GM10248 (cell line): ENCODE measurements at regions of chr4 and their contacts with region 1.

Region 1: DNA sequence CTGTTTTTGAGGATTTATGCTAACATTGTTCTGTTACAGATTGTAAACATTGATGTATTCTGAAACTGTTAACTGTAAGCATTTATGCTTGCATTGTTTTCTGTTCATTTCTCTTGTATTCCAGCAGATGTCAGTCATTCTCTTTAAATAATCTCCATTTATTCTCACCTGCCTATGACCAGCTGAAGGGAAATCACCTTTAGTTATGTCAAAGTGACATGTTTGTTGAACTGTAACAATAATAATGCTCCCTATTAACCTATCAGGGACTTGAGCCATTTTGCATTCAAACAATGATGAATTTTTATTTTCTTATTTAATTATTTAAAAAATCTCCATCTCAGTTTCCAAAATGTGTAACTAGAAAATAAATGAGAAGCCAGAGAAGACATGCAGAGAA is 58.0 kb downstream of the SPCS3 start:
- DNase-seq: peak; percentile 32
- CTCF ChIP-seq: peak; percentile 43

Region 2: DNA sequence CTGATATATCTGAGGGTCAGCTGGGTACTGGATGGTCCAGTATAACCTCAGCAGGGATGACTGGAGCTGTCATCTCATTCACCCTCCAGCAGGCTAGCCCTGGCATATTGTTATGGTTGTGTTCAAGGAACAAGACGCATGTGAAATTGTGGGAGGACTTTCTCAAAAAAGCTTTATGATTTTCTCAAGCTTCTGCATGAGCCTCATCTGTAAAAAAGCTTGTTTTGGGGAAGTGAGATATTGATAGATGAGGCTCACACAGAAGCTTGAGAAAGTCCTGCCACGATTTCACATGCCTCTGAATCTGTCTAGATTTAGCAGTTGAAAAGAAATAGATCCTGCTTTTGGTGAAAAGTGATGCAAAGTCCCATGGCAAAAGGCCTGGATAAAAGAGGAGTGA is 35.4 kb after region 1 on chr4:
- CTCF ChIA-PET with region 1: interaction called, 11 read pairs
- POLR2A ChIA-PET with region 1: no interaction called
- DNase-seq: peak; percentile 35
- CTCF ChIP-seq: no peak

Region 3: DNA sequence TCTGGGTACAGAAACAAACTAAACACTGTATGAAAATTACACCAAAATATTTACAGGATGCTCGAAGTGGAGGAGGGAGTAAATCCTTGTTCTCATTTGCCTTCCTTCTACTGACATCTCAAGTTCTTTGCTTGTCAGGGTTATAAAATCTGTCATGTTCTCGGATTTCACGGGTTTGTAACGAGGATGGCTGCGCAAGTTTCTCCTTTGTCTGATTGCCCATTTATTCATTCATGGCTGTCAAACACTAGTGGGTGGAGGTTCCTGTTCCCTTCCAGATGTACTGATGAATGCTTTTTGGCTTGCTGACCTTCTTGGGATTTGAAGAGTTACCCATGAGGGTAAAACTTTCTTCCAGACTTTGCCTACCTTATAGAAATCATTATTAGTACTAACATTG is 148.9 kb after region 1 on chr4:
- CTCF ChIA-PET with region 1: no interaction called
- POLR2A ChIA-PET with region 1: no interaction called
- DNase-seq: no peak
- CTCF ChIP-seq: no peak

Region 4: GRCh38 chr4:176642472-176642871 is 264.7 kb after region 1 on chr4:
- CTCF ChIA-PET with region 1: interaction called, 11 read pairs
- POLR2A ChIA-PET with region 1: no interaction called
- DNase-seq: peak; percentile 10
- CTCF ChIP-seq: no peak

Region 5: GRCh38 chr4:177047070-177047850 is 669.5 kb after region 1 on chr4:
- CTCF ChIA-PET with region 1: interaction called, 122 read pairs
- POLR2A ChIA-PET with region 1: no interaction called
- DNase-seq: peak; percentile 50
- CTCF ChIP-seq: peak; percentile 83